ENCODE measurements at regions of chr10 and their contacts with region 1.

Region 1: GRCh38 chr10:17910125-17910789 is 41.5 kb upstream of the SLC39A12 start:
- DNase-seq: peak in 1 of 2 donors; percentile 56
- ATAC-seq: peak in 4 of 8 donors; percentile 20 to 65 (median 43)
- H3K4me3 ChIP-seq: no peak overlapping the region
- H3K27ac ChIP-seq: peak overlapping the region in 1 of 10 donors; percentile 3
- H3K4me1 ChIP-seq: peaks cover 0 to 16% (median 7%) of the 10 kb centered on the region in 9 donors
- H3K27me3 ChIP-seq: no peaks in the 10 kb centered on the region
- CTCF ChIP-seq: peak; percentile 23 to 68 (median 58)

Region 2: GRCh38 chr10:17353559-17354300 is 556.5 kb before region 1 on chr10:
- intact Hi-C with region 1: no loop called
- DNase-seq: no peak
- ATAC-seq: no peak
- H3K4me3 ChIP-seq: no peak overlapping the region
- H3K27ac ChIP-seq: no peak overlapping the region
- H3K4me1 ChIP-seq: peaks cover 0 to 11% (median 5%) of the 10 kb centered on the region in 9 donors
- H3K27me3 ChIP-seq: no peaks in the 10 kb centered on the region
- CTCF ChIP-seq: no peak

Region 3: DNA sequence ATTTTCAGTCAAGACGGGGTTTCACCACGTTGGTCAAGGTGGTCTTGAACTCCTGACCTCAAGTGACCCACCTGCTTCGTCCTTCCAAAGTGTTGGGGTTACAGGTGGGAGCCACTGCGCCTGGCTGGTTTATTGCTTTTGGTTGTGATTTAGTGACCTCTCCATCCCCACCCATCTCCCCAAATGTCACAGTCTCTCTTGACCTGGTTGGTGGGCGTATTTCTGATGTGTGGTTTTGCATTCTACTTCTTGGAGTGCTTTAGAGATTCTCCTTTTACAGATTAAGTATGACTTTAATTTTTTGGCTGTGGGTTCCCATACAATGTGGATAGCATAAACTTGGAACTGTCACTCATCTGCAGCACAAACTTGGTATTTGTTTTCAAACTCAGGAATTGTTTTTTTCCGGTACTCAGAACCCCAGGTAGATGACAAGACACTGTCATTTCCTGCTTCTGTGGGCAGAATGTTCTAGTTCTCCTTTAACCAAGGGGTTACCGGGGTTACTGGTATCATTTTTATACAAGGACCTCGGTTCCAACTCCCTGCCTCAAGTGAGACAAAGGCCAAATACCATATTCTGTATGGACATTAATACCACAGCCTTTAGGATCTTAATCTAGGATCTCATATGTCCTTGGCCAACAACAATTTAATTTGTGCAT is 50.6 kb before region 1 on chr10:
- intact Hi-C with region 1: loop called in 1 of 10 experiments (anchors 5 kb)
- DNase-seq: no peak
- ATAC-seq: no peak
- H3K4me3 ChIP-seq: no peak overlapping the region
- H3K27ac ChIP-seq: no peak overlapping the region
- H3K4me1 ChIP-seq: no peaks in the 10 kb centered on the region
- H3K27me3 ChIP-seq: peaks cover 0 to 3% (median 0%) of the 10 kb centered on the region in 7 donors
- CTCF ChIP-seq: no peak

Region 4: GRCh38 chr10:18104223-18104872 is 194.1 kb after region 1 on chr10:
- intact Hi-C with region 1: loop called in 6 of 10 experiments (anchors 1 to 10 kb)
- DNase-seq: peak; percentile 30 to 50
- ATAC-seq: no peak
- H3K4me3 ChIP-seq: no peak overlapping the region
- H3K27ac ChIP-seq: no peak overlapping the region
- H3K4me1 ChIP-seq: no peaks in the 10 kb centered on the region
- H3K27me3 ChIP-seq: no peaks in the 10 kb centered on the region
- CTCF ChIP-seq: peak; percentile 35 to 78 (median 70)

Region 5: GRCh38 chr10:18109341-18109870 is 199.1 kb after region 1 on chr10:
- intact Hi-C with region 1: loop called in 6 of 10 experiments (anchors 1 to 10 kb)
- DNase-seq: no peak
- ATAC-seq: no peak
- H3K4me3 ChIP-seq: no peak overlapping the region
- H3K27ac ChIP-seq: no peak overlapping the region
- H3K4me1 ChIP-seq: no peaks in the 10 kb centered on the region
- H3K27me3 ChIP-seq: no peaks in the 10 kb centered on the region
- CTCF ChIP-seq: no peak

Region 6: GRCh38 chr10:18140149-18140956 is 230.1 kb after region 1 on chr10 and contains the start of gene CACNB2:
- intact Hi-C with region 1: loop called in 1 of 10 experiments (anchors 5 kb)
- DNase-seq: peak; percentile 68 to 74
- ATAC-seq: peak; percentile 70 to 87 (median 78)
- H3K4me3 ChIP-seq: peak within 1 kb of the TSS; percentile 22 to 76 (median 61)
- H3K27ac ChIP-seq: peak within 1 kb of the TSS; percentile 51 to 86 (median 82)
- H3K4me1 ChIP-seq: peaks cover 0 to 27% (median 11%) of the 10 kb centered on the region in 9 donors
- H3K27me3 ChIP-seq: peaks cover 0 to 44% (median 20%) of the 10 kb centered on the region in 7 donors
- CTCF ChIP-seq: peak in 4 of 9 donors; percentile 6 to 27 (median 16)
- total RNA-seq, gene CACNB2: 22.3 to 71.1 (median 38.8) TPM

Region 7: DNA sequence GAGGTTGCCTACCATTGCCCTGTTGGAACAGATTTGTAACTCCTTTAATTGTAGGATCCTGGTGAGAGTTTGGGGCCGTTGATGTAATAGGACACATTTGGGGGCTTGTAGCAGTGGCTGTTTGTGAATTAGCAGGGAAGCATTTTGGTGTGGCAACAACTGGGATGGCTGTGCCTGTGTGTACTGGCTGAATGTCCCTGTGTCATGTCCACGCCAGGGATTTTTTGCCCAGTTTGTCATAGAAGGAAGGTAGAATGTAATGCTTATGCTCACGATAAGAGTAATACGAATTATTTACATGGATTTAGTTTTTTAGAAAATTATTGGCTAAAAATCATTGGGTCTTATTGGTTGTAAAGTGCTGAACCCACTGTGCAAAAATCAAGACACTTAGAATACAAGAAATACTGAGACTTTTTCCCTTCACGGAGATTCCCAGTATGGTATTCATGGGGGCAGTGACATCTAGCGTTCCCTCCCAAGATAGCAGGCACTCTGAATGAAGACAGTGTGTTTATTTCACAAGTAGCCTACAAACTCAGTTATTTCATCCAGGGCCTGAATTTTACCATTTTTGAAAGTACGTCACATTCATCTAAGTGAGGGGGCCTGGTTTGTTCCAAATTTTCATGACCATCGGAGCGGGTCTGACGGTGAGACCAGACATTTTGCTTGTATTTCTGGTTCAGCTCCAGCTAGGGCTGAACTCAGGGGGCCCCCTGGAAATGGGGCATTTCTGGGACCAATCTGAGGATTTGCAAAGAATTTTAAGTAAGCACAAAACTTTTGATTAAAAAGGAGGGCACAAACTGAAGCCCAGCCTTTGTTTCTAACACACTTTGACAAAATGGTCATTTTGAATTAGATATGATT is 304.7 kb after region 1 on chr10:
- intact Hi-C with region 1: loop called in 9 of 10 experiments (anchors 5 to 10 kb)
- DNase-seq: peak in 1 of 2 donors; percentile 38
- ATAC-seq: peak; percentile 63 to 77 (median 70)
- H3K4me3 ChIP-seq: no peak overlapping the region
- H3K27ac ChIP-seq: no peak overlapping the region
- H3K4me1 ChIP-seq: peaks cover 0 to 35% (median 13%) of the 10 kb centered on the region in 9 donors
- H3K27me3 ChIP-seq: no peaks in the 10 kb centered on the region
- CTCF ChIP-seq: peak; percentile 56 to 91 (median 76)